Caco-2 (cell line): ENCODE measurements at regions of chr2 and their contacts with region 1.

Region 1: DNA sequence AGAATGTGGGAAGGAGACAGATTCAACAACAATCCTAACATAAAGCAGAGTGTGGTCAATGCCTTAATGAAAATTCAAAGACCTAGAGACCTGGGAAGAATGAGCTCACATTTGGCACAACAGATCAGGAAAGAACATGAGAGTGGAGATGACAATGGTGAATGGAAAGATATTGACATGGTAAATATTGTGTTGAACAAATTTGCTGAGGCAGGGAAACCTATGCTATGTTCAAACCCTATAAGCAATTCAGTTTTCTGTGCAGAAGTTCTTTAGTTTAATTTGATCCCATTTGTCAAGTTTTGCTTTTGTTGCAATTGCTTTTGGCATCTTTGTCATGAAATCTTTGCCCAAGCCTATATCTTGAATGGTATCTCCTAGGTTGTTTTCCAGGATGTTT is 199.4 kb upstream of the LRRTM4 start:
- DNase-seq: no peak
- H3K4me3 ChIP-seq: no peak overlapping the region
- H3K4me3 Mint-ChIP-seq: no peak overlapping the region
- H3K27ac Mint-ChIP-seq: no peak overlapping the region
- H3K4me1 ChIP-seq: no peaks in the 10 kb centered on the region
- H3K4me1 Mint-ChIP-seq: peaks cover 5% of the 10 kb centered on the region
- H3K27me3 ChIP-seq: no peaks in the 10 kb centered on the region
- H3K27me3 Mint-ChIP-seq: no peaks in the 10 kb centered on the region
- CTCF ChIP-seq: no peak

Region 2: DNA sequence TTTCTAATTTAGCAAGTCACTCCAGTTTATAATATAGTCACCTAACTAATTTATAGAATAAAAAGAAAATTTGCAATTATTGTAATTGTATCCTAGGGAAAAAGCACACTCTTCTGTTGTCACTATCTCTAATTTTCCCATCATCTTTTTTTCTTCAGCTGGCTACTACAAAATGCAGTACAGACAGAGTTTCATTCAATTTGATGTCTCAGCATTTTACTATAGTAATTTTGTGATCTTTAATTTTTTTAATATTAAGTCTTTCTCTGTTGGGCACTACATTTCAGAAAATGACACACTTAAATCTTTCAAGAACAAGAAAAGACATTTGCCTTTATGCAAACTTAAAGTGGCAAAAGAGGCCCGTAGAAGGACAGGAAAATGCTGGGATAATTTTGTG is 317.4 kb before region 1 on chr2:
- CTCF ChIA-PET with region 1: no interaction called
- POLR2A ChIA-PET with region 1: no interaction called
- intact Hi-C with region 1: loop called (anchors 10 kb)
- DNase-seq: no peak
- H3K4me3 ChIP-seq: no peak overlapping the region
- H3K4me3 Mint-ChIP-seq: no peak overlapping the region
- H3K27ac Mint-ChIP-seq: no peak overlapping the region
- H3K4me1 ChIP-seq: no peaks in the 10 kb centered on the region
- H3K4me1 Mint-ChIP-seq: no peaks in the 10 kb centered on the region
- H3K27me3 ChIP-seq: no peaks in the 10 kb centered on the region
- H3K27me3 Mint-ChIP-seq: peaks cover 5% of the 10 kb centered on the region
- CTCF ChIP-seq: no peak

Region 3: DNA sequence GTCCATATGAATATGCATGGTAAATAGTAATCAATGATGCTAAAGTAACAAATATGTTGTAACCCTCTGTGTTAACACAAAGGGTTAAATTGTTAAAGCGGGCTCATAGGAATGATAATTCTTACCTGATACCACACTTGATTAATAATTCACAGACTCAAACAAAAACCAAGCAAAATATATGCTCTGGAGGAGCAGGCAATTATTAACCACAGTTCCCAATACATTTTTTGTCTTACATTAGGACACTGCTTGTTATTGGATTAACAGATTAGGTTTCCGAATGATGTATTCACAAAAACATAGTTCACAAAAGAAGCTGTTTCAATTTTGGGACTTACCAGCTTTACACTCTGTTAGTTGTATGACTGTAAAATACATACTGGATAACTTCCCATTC is 101.4 kb after region 1 on chr2:
- CTCF ChIA-PET with region 1: no interaction called
- POLR2A ChIA-PET with region 1: no interaction called
- intact Hi-C with region 1: no loop called
- DNase-seq: peak in 1 of 2 experiments; percentile 52
- H3K4me3 ChIP-seq: no peak overlapping the region
- H3K4me3 Mint-ChIP-seq: no peak overlapping the region
- H3K27ac Mint-ChIP-seq: no peak overlapping the region
- H3K4me1 ChIP-seq: peaks cover 22% of the 10 kb centered on the region
- H3K4me1 Mint-ChIP-seq: no peaks in the 10 kb centered on the region
- H3K27me3 ChIP-seq: no peaks in the 10 kb centered on the region
- H3K27me3 Mint-ChIP-seq: no peaks in the 10 kb centered on the region
- CTCF ChIP-seq: no peak